H1 (cell line): ENCODE measurements at regions of chr19 and their contacts with region 1.

Region 1: DNA sequence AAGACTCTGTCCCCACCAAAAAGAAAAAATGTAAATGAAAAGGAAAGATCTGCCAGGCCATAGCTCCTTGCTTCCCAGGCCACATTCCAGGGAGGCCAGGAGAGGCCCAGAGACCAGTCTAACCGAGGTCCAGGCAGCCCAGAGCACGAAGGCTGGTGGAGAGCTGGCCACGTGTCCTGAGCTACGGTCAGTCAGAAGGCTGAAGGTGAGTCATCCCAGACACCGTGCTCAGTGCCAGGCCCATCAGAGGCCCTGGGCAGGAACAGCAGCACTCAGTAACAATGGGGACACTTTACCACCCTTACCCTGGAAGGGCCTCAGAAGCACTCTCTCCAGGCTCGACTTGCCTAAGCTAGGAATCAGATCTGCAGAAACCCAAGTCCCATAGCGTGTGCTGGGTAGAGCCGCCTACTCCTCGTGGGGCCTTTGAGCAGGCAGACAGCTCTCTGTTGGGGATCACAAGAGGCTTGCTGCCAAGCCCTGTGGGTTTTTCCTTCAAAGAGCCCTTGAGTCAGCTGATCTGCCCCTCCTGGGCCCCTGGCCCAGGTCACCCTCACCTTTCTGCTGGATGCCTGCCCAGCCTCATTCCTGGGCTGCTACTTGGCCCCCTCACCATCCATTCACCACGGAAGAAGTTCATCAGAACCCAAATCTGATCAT is 11.6 kb upstream of the DNMT1 start:
- DNase-seq: no peak
- H3K4me3 ChIP-seq: no peak overlapping the region
- H3K27ac ChIP-seq: no peak overlapping the region
- H3K4me1 ChIP-seq: peaks cover 0 to 3% (median 0%) of the 10 kb centered on the region in 4 experiments; a peak in 1 of 7 replicates
- H3K27me3 ChIP-seq: no peaks in the 10 kb centered on the region
- CTCF ChIP-seq: no peak
- EP300 ChIP-seq: no peak
- POLR2A ChIP-seq: no peak
- RAD21 ChIP-seq: no peak

Region 2: GRCh38 chr19:10043286-10043927 is 162.9 kb before region 1 on chr19:
- CTCF ChIA-PET with region 1: no interaction called
- POLR2A ChIA-PET with region 1: no interaction called
- DNase-seq: no peak
- H3K4me3 ChIP-seq: no peak overlapping the region
- H3K27ac ChIP-seq: no peak overlapping the region
- H3K4me1 ChIP-seq: no peaks in the 10 kb centered on the region
- H3K27me3 ChIP-seq: no peaks in the 10 kb centered on the region
- CTCF ChIP-seq: no peak
- EP300 ChIP-seq: no peak
- POLR2A ChIP-seq: no peak
- RAD21 ChIP-seq: no peak

Region 3: GRCh38 chr19:10194500-10195289 is 11.7 kb before region 1 on chr19 and contains the start of gene DNMT1:
- CTCF ChIA-PET with region 1: interaction called, 3 read pairs
- POLR2A ChIA-PET with region 1: interaction called, 10 read pairs
- DNase-seq: peak; percentile 85 to 99
- H3K4me3 ChIP-seq: peak within 1 kb of the TSS; percentile 64 to 92 (median 80)
- H3K27ac ChIP-seq: peak within 1 kb of the TSS; percentile 83
- H3K4me1 ChIP-seq: no peaks in the 10 kb centered on the region
- H3K27me3 ChIP-seq: no peaks in the 10 kb centered on the region
- CTCF ChIP-seq: no peak
- EP300 ChIP-seq: peak in 1 of 2 experiments; percentile 100; a peak in 2 of 3 replicates
- POLR2A ChIP-seq: peak; percentile 82 to 97
- RAD21 ChIP-seq: no peak; a peak in 1 of 4 replicates
- total RNA-seq, gene DNMT1: 208 and 210 TPM in 2 replicates

Region 4: GRCh38 chr19:10279737-10280442 is 73.5 kb after region 1 on chr19:
- CTCF ChIA-PET with region 1: no interaction called
- POLR2A ChIA-PET with region 1: no interaction called
- DNase-seq: no peak
- H3K4me3 ChIP-seq: no peak overlapping the region
- H3K27ac ChIP-seq: no peak overlapping the region
- H3K4me1 ChIP-seq: peaks cover 0 to 5% (median 2%) of the 10 kb centered on the region in 4 experiments; a peak in 1 of 7 replicates
- H3K27me3 ChIP-seq: no peaks in the 10 kb centered on the region
- CTCF ChIP-seq: no peak
- EP300 ChIP-seq: no peak
- POLR2A ChIP-seq: no peak
- RAD21 ChIP-seq: no peak

Region 5: GRCh38 chr19:10295305-10295846 is 89.0 kb after region 1 on chr19:
- CTCF ChIA-PET with region 1: no interaction called
- POLR2A ChIA-PET with region 1: no interaction called
- DNase-seq: peak in 1 of 2 experiments; percentile 74
- H3K4me3 ChIP-seq: peak overlapping the region; percentile 19 to 59 (median 40); a peak in 7 of 8 replicates
- H3K27ac ChIP-seq: no peak overlapping the region
- H3K4me1 ChIP-seq: peaks cover 0 to 34% (median 16%) of the 10 kb centered on the region in 4 experiments; a peak in 6 of 7 replicates
- H3K27me3 ChIP-seq: peaks cover 42 to 68% (median 64%) of the 10 kb centered on the region in 4 experiments
- CTCF ChIP-seq: peak in 2 of 3 experiments; percentile 16 to 28; a peak in 3 of 4 replicates
- EP300 ChIP-seq: no peak
- POLR2A ChIP-seq: no peak
- RAD21 ChIP-seq: no peak